ENCODE measurements at regions of chr20 and their contacts with region 1.

Region 1: DNA sequence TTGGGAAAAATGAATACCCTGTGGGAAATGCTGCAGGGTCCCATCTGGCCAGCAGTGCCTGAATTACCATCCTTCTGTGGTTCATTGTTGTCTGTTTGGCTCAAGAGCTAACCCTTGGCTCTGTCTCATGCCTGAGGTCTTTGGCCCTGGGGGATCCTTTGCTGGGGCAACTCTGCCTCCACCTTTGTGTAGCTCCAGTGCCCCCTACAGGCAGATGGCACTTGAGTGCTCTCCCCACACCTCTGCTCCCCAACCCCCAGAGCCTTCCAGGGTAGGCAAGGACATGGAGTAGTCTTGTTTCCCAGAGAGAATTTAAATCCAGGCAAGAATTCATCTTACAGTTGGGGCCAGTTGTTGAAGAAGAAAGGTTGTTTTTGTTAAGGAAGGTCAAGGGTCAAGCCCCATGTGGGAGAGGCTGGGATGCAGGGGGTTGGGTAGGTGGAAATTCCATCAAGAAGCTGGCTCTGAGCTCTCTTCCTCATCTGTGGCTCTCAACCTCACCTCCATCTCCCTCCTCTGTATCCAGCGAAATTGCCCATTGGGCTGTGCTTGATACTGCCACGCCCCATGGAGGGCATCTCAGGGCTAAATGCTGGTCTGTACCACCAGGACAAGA is 44.2 kb downstream of the ZNF831 start:
- DNase-seq: peak; percentile 88
- ATAC-seq: peak; percentile 96
- H3K4me3 Mint-ChIP-seq: no peak overlapping the region
- H3K27ac Mint-ChIP-seq: peak overlapping the region; percentile 72
- H3K4me1 Mint-ChIP-seq: peaks cover 28% of the 10 kb centered on the region
- H3K27me3 Mint-ChIP-seq: no peaks in the 10 kb centered on the region
- CTCF ChIP-seq: peak; percentile 87

Region 2: DNA sequence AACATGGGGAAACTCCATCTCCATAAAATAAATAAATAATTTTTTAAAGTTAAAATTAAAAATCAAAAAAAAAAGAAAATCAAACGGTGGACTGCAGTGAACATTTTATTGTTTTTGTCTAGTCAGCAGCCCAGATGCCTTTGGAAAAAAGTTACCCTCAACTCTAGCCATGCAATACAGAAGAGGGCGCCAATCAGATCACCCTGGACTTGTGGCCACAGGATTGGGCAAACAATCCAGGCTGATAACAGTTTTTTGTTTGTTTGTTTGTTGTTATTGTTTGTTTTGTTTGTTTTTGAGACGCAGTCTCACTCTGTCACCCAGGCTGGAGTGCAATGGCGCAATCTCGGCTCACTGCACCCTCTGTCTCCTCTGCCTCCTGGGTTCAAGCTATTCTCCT is 257.2 kb before region 1 on chr20:
- CTCF ChIA-PET with region 1: no interaction called
- POLR2A ChIA-PET with region 1: no interaction called
- intact Hi-C with region 1: no loop called
- DNase-seq: no peak
- ATAC-seq: no peak
- H3K4me3 Mint-ChIP-seq: no peak overlapping the region
- H3K27ac Mint-ChIP-seq: no peak overlapping the region
- H3K4me1 Mint-ChIP-seq: no peaks in the 10 kb centered on the region
- H3K27me3 Mint-ChIP-seq: peaks cover 3% of the 10 kb centered on the region
- CTCF ChIP-seq: no peak

Region 3: GRCh38 chr20:59074445-59074844 is 133.4 kb before region 1 on chr20:
- CTCF ChIA-PET with region 1: interaction called, 17 read pairs
- POLR2A ChIA-PET with region 1: no interaction called
- intact Hi-C with region 1: no loop called
- DNase-seq: peak; percentile 57
- ATAC-seq: peak; percentile 65
- H3K4me3 Mint-ChIP-seq: no peak overlapping the region
- H3K27ac Mint-ChIP-seq: no peak overlapping the region
- H3K4me1 Mint-ChIP-seq: peaks cover 61% of the 10 kb centered on the region
- H3K27me3 Mint-ChIP-seq: peaks cover 12% of the 10 kb centered on the region
- CTCF ChIP-seq: no peak

Region 4: DNA sequence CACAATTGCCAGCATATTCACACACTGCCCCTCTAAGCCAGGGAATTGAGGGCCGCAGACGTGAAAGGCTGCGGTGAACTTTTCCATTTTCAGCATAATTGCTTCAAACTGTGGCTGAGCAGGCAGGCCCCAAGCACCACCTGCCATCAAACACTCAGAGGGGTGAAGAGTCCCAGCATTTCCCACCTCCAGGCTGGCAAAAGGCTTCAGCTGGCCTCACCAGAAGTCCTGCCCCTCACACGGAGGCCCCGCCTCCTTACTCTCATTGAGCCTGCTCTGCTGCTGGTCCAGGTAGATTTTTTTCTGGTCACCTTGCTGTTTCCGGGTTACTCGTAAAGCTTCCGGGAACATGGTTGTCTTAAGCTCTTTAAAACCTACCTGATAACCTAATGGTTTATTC is 113.3 kb before region 1 on chr20:
- CTCF ChIA-PET with region 1: interaction called, 234 read pairs
- POLR2A ChIA-PET with region 1: interaction called, 4 read pairs
- intact Hi-C with region 1: no loop called
- DNase-seq: no peak
- ATAC-seq: no peak
- H3K4me3 Mint-ChIP-seq: no peak overlapping the region
- H3K27ac Mint-ChIP-seq: no peak overlapping the region
- H3K4me1 Mint-ChIP-seq: no peaks in the 10 kb centered on the region
- H3K27me3 Mint-ChIP-seq: no peaks in the 10 kb centered on the region
- CTCF ChIP-seq: no peak

Region 5: DNA sequence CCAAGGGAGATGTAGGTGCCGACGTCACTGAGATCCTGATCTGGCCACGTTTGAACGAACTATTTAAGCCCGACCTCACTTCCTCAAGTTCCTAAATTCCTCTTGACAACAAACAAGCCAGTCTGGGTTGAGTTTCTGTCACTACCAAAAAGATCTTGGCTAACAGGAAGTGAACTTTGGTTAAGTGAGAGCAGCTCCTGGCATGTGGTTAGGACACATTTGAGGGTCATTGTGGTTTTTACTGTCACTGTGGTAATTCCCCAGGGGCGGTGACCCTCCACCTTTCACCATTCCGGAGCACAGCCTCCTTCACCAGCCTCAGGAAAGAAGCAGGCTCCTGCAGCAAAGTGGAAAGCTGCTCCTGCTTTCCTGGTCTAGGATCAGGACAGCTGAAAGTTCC is 87.4 kb before region 1 on chr20:
- CTCF ChIA-PET with region 1: interaction called, 26 read pairs
- POLR2A ChIA-PET with region 1: interaction called, 5 read pairs
- intact Hi-C with region 1: no loop called
- DNase-seq: peak; percentile 67
- ATAC-seq: peak; percentile 15
- H3K4me3 Mint-ChIP-seq: no peak overlapping the region
- H3K27ac Mint-ChIP-seq: peak overlapping the region; percentile 97
- H3K4me1 Mint-ChIP-seq: peaks cover 75% of the 10 kb centered on the region
- H3K27me3 Mint-ChIP-seq: no peaks in the 10 kb centered on the region
- CTCF ChIP-seq: no peak

Region 6: GRCh38 chr20:59159493-59160376 is 48.1 kb before region 1 on chr20:
- CTCF ChIA-PET with region 1: interaction called, 17 read pairs
- POLR2A ChIA-PET with region 1: interaction called, 4 read pairs
- intact Hi-C with region 1: no loop called
- DNase-seq: peak; percentile 87
- ATAC-seq: peak; percentile 89
- H3K4me3 Mint-ChIP-seq: peak overlapping the region; percentile 95
- H3K27ac Mint-ChIP-seq: peak overlapping the region; percentile 98
- H3K4me1 Mint-ChIP-seq: peaks cover 74% of the 10 kb centered on the region
- H3K27me3 Mint-ChIP-seq: no peaks in the 10 kb centered on the region
- CTCF ChIP-seq: no peak

Region 7: GRCh38 chr20:59184880-59185447 is 22.9 kb before region 1 on chr20:
- CTCF ChIA-PET with region 1: interaction called, 15 read pairs
- POLR2A ChIA-PET with region 1: no interaction called
- intact Hi-C with region 1: no loop called
- DNase-seq: peak; percentile 35
- ATAC-seq: no peak
- H3K4me3 Mint-ChIP-seq: no peak overlapping the region
- H3K27ac Mint-ChIP-seq: peak overlapping the region; percentile 14
- H3K4me1 Mint-ChIP-seq: peaks cover 54% of the 10 kb centered on the region
- H3K27me3 Mint-ChIP-seq: no peaks in the 10 kb centered on the region
- CTCF ChIP-seq: no peak

Region 8: GRCh38 chr20:59269411-59270025 is 61.7 kb after region 1 on chr20:
- CTCF ChIA-PET with region 1: no interaction called
- POLR2A ChIA-PET with region 1: no interaction called
- intact Hi-C with region 1: no loop called
- DNase-seq: peak; percentile 64
- ATAC-seq: peak; percentile 82
- H3K4me3 Mint-ChIP-seq: no peak overlapping the region
- H3K27ac Mint-ChIP-seq: no peak overlapping the region
- H3K4me1 Mint-ChIP-seq: peaks cover 27% of the 10 kb centered on the region
- H3K27me3 Mint-ChIP-seq: no peaks in the 10 kb centered on the region
- CTCF ChIP-seq: no peak

Measured in activated CD8-positive, alpha-beta T cell treated with anti-CD3 and anti-CD28 coated beads for 36 hours (primary cell).